ENCODE measurements at regions of chr3 and their contacts with region 1.

Region 1: GRCh38 chr3:100254168-100254777 is 6.5 kb upstream of the TBC1D23 start:
- DNase-seq: peak; percentile 71
- H3K4me3 ChIP-seq: no peak overlapping the region
- H3K27ac ChIP-seq: no peak overlapping the region
- H3K4me1 ChIP-seq: no peaks in the 10 kb centered on the region
- H3K27me3 ChIP-seq: no peaks in the 10 kb centered on the region
- CTCF ChIP-seq: peak in 1 of 3 experiments; percentile 60
- POLR2A ChIP-seq: no peak

Region 2: GRCh38 chr3:99833617-99834205 is 420.6 kb before region 1 on chr3:
- intact Hi-C with region 1: loop called (anchors 5 kb)
- DNase-seq: no peak
- H3K4me3 ChIP-seq: no peak overlapping the region
- H3K27ac ChIP-seq: no peak overlapping the region
- H3K4me1 ChIP-seq: no peaks in the 10 kb centered on the region
- H3K27me3 ChIP-seq: no peaks in the 10 kb centered on the region
- CTCF ChIP-seq: no peak
- POLR2A ChIP-seq: no peak

Region 3: GRCh38 chr3:100073899-100074307 is 180.4 kb before region 1 on chr3:
- intact Hi-C with region 1: loop called (anchors 10 kb)
- DNase-seq: no peak
- H3K4me3 ChIP-seq: no peak overlapping the region
- H3K27ac ChIP-seq: peak overlapping the region in 1 of 2 donors; percentile 2
- H3K4me1 ChIP-seq: no peaks in the 10 kb centered on the region
- H3K27me3 ChIP-seq: no peaks in the 10 kb centered on the region
- CTCF ChIP-seq: no peak
- POLR2A ChIP-seq: no peak

Region 4: GRCh38 chr3:100537622-100538338 is 283.5 kb after region 1 on chr3:
- intact Hi-C with region 1: no loop called
- DNase-seq: no peak
- H3K4me3 ChIP-seq: no peak overlapping the region
- H3K27ac ChIP-seq: peak overlapping the region; percentile 35 to 64
- H3K4me1 ChIP-seq: peaks cover 17% of the 10 kb centered on the region
- H3K27me3 ChIP-seq: no peaks in the 10 kb centered on the region
- CTCF ChIP-seq: no peak
- POLR2A ChIP-seq: no peak

Measured in testis (tissue), 5 donors.